Right ventricle myocardium inferior (tissue), 1 donor: ENCODE measurements at regions of chr16 and their contacts with region 1.

Region 1: DNA sequence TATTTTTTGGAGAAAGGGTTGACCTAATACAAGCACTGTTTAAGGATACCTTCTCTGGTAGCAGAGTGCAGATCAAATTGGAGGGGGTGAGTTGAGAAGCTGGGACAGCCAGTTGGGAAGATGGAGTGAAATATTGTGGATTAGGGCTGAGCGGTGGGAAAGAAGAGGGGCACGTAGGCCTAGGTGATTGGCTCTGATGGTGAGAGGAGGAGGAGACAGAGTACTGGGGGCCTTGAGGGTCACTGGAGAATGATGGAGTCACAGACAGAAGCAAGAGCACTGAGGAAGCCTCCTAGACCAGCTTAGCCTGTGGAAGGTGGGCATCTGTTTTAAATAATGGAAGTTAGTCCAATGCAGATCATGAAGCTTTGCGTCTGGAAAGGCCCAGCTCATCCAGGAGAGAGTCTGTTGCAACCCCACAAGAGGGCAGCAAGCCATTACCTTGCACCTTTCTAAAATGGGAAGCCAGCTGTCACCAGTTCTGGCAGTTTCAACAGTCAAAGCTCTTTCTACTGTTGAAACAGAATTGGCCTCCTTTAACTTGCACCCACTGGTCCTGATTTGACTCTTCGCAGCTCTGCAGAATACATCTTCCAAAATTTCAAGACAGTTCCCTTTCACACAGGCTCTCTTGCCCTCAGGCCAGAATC is 11.8 kb downstream of the SLC9A5 start:
- DNase-seq: no peak
- ATAC-seq: peak; percentile 62

Region 2: GRCh38 chr16:66924527-66925321 is 335.8 kb before region 1 on chr16:
- intact Hi-C with region 1: no loop called
- DNase-seq: peak; percentile 76
- ATAC-seq: peak; percentile 9

Region 3: GRCh38 chr16:67173808-67174705 is 86.5 kb before region 1 on chr16:
- intact Hi-C with region 1: no loop called
- DNase-seq: peak; percentile 94
- ATAC-seq: peak; percentile 71

Region 4: GRCh38 chr16:67216612-67217490 is 43.7 kb before region 1 on chr16:
- intact Hi-C with region 1: no loop called
- DNase-seq: peak; percentile 76
- ATAC-seq: peak; percentile 89

Region 5: GRCh38 chr16:67399181-67399733 is 138.7 kb after region 1 on chr16:
- intact Hi-C with region 1: loop called (anchors 5 kb)
- DNase-seq: no peak
- ATAC-seq: peak; percentile 53

Region 6: DNA sequence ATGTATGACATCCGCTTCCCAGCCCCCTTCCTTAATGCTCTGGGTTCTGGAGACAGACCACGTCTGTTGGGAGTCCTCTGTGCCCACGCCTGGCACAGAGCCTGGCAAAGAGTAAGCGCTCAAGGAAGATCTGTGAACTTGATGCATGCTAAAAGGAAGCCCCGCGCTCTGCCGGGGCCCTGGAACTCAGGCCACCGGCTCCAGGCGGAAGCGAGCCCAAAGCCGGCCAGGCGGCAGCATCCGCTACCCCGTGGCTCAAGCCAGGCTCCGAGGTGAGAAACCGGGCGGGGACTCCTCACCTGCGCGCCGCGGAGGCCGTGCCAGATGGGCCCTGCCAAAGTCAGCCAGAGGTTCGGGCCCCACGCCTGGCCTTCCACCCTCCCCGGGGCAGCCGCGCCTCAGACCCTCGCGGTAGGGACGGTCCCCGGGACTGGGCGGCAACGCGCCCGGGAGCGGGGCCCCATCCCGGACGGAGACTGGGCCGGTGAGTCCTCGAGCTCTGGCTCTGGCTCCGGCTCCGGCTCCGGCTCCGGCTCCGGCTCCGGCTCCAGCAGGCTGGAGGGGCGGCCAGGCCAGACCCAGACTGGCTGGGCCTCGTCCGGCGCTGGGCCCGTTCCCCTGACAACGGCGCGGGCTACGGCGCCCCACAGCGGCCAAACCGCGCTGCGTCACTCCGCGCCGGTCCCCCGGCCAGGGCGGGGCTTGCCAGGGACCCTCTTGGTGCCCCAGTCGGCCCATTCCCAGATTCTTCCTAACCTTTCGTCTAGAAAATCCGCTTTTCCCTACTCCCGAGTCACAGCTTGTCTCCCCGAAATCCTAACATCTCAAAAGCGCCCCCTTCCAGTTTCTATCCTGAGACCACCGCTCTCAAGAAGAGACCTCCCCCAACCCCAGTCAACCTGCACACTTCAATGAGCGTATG is 155.6 kb after region 1 on chr16 and contains the start of gene ZDHHC1:
- intact Hi-C with region 1: loop called (anchors 1 kb)
- DNase-seq: peak; percentile 87
- ATAC-seq: peak; percentile 97
- total RNA-seq, gene ZDHHC1: 2.9 TPM